Transverse colon (tissue), 4 donors: ENCODE measurements at regions of chr9 and their contacts with region 1.

Region 1: DNA sequence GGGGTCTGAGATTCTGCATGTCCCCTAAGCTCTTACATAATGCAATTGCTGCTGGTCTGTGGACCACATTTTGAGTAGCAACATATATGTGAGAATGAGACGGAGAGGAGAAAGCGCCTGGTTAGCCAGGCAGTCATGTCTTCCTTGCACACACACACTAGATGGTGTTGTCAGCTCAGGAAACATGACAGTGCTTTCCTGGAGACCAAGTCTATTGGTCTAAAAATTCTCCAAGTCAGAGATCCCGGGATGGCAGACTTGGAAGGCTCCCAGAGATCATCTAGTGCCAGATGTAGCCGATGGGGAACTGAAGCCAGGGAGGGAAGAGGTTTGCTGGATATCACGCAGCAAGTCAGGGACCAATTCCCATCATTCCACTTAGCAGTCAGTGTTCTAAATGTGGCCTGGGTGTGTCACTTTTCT is 53.4 kb downstream of the GALNT12 start:
- DNase-seq: peak; percentile 44
- H3K4me3 ChIP-seq: no peak overlapping the region
- H3K27ac ChIP-seq: peak overlapping the region; percentile 48 to 63 (median 56)
- H3K4me1 ChIP-seq: peaks cover 0 to 7% (median 0%) of the 10 kb centered on the region in 4 donors
- H3K27me3 ChIP-seq: no peaks in the 10 kb centered on the region
- CTCF ChIP-seq: peak; percentile 14 to 35 (median 24)
- EP300 ChIP-seq: peak; percentile 72
- POLR2A ChIP-seq: no peak

Region 2: DNA sequence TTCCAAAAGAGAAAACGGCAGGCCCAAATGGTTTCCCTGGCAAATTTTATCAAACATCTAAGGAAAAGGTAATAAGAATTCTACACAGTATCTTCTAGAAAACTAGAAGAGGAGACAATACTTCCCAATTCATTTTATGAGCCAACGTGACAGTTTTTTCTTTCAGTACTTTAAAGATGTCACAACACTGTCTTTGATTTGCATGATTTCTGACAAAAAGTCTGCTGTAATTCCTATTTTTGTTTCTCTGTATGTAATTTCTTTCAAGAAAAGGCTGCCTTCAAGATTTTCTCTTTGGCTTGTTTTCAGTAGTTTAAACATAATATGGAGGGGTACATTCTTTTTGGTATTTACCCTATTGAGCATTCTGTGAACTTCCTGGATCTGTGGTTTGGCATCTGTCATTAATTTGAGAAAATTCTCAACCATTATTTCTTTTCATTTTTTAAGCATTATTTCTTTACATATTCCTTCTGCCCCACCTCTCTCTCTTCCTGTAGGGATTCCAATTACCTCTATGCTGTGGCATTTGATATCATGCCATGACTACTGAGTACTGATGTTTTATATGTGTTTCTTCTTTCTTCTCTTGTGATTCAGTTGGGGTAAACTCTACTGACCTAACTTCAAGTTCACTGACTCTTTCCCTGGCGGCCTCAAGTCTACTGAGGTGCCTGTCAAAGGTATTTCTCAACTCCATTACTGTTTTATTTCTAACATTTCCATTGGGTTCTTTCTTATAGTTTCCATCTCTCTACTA is 96.7 kb before region 1 on chr9:
- in situ Hi-C with region 1: no loop called
- intact Hi-C with region 1: no loop called
- DNase-seq: no peak
- H3K4me3 ChIP-seq: no peak overlapping the region
- H3K27ac ChIP-seq: no peak overlapping the region
- H3K4me1 ChIP-seq: no peaks in the 10 kb centered on the region
- H3K27me3 ChIP-seq: no peaks in the 10 kb centered on the region
- CTCF ChIP-seq: no peak
- EP300 ChIP-seq: no peak
- POLR2A ChIP-seq: no peak

Region 3: GRCh38 chr9:98974994-98975712 is 114.3 kb after region 1 on chr9:
- in situ Hi-C with region 1: loop called in 1 of 4 experiments (anchors 25 kb)
- intact Hi-C with region 1: no loop called
- DNase-seq: peak; percentile 89
- H3K4me3 ChIP-seq: peak overlapping the region in 2 of 4 donors; percentile 8 to 29
- H3K27ac ChIP-seq: peak overlapping the region; percentile 51 to 71 (median 69)
- H3K4me1 ChIP-seq: peaks cover 10 to 34% (median 18%) of the 10 kb centered on the region in 4 donors
- H3K27me3 ChIP-seq: peaks cover 8% of the 10 kb centered on the region
- CTCF ChIP-seq: peak; percentile 96 to 98 (median 97)
- EP300 ChIP-seq: no peak
- POLR2A ChIP-seq: no peak

Region 4: DNA sequence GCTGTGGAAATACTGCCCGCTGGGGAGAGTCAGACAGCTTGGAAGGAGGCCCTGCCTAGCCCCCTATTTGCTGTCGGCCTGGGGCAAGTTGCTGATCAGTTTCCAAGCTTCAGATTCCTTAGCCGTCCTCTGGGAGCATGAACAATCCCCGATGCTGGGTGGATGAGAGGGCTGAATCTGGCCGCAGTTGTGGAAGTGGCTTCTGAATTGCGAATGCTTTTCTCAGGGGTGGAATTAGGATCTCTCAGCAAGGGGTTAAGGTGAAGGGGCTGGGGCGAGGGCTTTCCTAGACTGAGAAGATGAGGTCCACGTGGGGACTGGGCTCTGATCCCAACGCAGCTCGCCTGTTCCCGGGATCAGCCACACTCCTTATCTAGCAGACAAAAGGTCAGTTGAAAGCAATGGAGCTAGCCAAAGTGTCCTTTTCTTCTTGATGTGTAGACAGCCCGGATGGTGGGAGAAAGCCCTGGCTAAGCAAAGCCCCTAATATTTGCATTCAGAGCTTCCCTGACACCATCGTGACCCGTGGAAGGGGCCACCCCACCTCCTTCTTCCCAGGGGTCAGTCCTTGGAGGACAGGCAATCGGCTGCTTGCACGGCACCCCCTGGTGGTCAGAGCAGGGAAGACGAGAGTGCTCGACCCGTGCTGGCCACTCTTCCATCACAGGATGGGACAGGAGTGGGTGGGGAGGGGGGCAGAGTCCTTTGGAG is 137.7 kb after region 1 on chr9:
- in situ Hi-C with region 1: loop called (anchors 5 to 25 kb)
- intact Hi-C with region 1: loop called (anchors 2 kb)
- DNase-seq: peak; percentile 76
- H3K4me3 ChIP-seq: no peak overlapping the region
- H3K27ac ChIP-seq: peak overlapping the region; percentile 67 to 82 (median 76)
- H3K4me1 ChIP-seq: peaks cover 7 to 43% (median 14%) of the 10 kb centered on the region in 4 donors
- H3K27me3 ChIP-seq: no peaks in the 10 kb centered on the region
- CTCF ChIP-seq: peak; percentile 84 to 88 (median 86)
- EP300 ChIP-seq: no peak
- POLR2A ChIP-seq: no peak

Region 5: DNA sequence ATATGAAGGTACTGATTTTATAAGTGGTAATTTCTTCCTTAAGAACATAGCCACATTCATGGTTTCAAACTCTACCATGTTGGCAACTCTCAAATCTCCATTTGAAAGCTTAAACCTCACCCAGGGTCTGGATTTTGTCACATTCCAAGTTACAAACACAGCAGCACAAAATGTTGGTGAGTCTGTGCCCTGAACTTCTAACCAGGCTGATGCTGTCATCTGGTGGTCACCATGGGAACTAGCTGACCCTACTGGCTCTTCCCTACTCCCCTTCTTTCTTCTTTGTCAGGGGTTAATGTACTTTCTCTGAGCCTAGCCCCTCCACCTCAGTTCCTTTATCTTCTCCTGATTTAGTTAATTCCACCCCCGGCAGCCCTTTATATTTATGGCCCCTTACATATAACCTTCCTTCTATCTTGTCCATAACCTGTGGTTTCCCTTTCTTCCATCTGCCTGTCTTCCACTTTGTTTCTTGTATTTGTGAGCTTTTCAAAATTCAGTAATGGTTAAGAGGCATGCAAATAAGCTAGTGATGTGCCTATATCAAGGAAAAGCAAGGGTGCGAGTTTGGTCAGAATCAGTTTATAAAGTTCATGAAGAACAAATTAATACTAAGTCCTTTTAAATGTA is 279.9 kb after region 1 on chr9:
- in situ Hi-C with region 1: loop called (anchors 5 to 25 kb)
- intact Hi-C with region 1: no loop called
- DNase-seq: peak; percentile 29
- H3K4me3 ChIP-seq: no peak overlapping the region
- H3K27ac ChIP-seq: peak overlapping the region; percentile 42 to 60 (median 51)
- H3K4me1 ChIP-seq: peaks cover 0 to 27% (median 9%) of the 10 kb centered on the region in 4 donors
- H3K27me3 ChIP-seq: no peaks in the 10 kb centered on the region
- CTCF ChIP-seq: peak; percentile 75 to 81 (median 78)
- EP300 ChIP-seq: no peak
- POLR2A ChIP-seq: no peak

Region 6: DNA sequence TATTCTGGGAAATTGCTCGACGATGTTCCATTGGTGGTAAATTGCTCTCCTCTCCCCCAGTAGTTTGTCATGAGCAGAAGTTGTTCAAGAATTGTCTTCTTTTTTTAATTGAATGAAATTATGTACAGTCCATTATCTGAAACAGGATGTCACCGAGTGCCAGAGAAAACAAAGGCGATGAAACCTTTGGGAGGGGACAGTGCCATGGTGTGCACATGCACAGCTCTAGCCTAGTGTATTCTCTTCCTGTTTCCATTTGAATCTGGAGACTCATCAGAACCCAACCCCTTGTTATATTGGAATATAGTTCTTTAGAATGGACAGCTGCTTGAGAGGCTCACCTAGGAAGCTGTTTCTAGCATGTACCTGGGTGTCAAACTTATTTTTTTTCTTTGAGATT is 285.7 kb after region 1 on chr9:
- in situ Hi-C with region 1: loop called in 3 of 4 experiments (anchors 5 to 25 kb)
- intact Hi-C with region 1: no loop called
- DNase-seq: no peak
- H3K4me3 ChIP-seq: no peak overlapping the region
- H3K27ac ChIP-seq: no peak overlapping the region
- H3K4me1 ChIP-seq: peaks cover 0 to 7% (median 6%) of the 10 kb centered on the region in 4 donors
- H3K27me3 ChIP-seq: no peaks in the 10 kb centered on the region
- CTCF ChIP-seq: no peak
- EP300 ChIP-seq: no peak
- POLR2A ChIP-seq: no peak